Right ventricle myocardium inferior (tissue), 1 donor: ENCODE measurements at regions of chr3 and their contacts with region 1.

Region 1: DNA sequence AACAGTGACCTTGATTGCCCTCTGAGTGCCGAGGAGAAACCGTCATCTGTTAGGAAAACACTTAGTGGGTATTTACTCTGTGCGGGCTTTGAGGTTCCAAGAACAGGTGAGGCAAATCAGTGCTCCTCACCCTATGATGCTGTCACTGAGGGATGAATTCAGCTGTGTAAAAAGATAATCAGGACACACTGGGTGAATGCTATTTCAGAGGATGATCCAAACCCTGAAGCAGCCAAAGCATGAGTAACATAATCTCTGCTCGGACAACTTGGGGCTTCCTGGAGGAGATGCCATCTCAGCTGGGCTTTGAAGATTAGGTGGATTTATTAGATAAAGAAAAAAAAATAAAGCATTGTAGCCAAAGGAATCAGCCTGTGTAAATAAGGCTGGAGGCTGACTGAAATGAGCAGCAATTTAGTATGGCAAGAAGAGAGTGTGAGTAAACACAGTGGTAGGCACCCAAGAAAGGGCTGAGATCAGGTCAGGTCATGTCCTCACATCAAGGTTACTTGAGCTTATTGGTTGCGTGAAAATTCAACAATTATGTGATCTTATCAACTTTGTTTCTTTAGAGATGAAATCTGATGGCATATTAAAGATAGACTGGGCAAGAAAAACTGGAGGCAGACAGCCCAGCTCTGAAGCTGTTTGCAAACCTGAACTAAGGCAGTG is 10.7 kb upstream of the GADL1 start:
- DNase-seq: no peak
- ATAC-seq: no peak

Region 2: GRCh38 chr3:29854821-29855220 is 1050.3 kb before region 1 on chr3:
- intact Hi-C with region 1: no loop called
- DNase-seq: no peak
- ATAC-seq: no peak

Region 3: GRCh38 chr3:30779686-30780287 is 125.3 kb before region 1 on chr3:
- intact Hi-C with region 1: loop called (anchors 10 kb)
- DNase-seq: no peak
- ATAC-seq: no peak